ENCODE measurements at regions of chr10 and their contacts with region 1.

Region 1: DNA sequence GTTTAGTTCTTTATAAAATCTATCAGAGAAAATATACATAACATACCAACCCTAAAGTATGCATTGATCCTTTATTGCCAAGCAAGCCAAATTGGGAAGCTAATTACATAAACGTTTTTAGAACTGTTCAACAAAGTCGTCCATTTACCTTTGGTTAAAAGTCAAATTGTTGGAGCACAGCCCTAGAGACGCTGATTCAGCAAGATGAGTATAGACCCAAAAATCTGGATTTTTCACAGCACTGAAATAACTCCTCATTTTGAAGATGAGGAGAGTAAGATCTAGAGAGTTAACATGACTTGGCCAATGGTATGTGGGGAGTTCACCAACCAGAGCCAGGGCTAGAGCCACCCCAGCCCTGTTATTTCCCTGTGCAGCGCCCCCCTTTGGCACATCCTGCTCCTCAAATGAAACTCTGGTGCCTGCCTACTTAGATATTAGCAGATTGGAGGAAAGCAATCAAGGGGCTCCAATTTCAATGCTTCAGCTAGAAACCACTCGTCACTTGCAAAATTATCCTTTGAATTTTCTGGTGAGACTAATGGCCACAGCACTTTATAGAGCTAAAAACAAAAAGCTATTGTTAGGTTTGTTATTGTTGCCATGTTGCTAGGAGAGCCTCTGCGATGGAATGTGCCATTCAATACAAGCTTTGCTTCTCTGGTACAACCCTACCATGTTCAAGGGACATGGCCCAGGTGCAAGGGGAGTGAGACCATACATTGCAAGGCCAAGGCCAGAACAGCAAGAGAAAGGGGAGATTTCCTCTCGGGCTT is 132.6 kb upstream of the ZEB1 start:
- DNase-seq: no peak
- ATAC-seq: no peak
- H3K4me3 Mint-ChIP-seq: no peak overlapping the region
- H3K27ac Mint-ChIP-seq: no peak overlapping the region
- H3K4me1 Mint-ChIP-seq: no peaks in the 10 kb centered on the region
- H3K27me3 Mint-ChIP-seq: no peaks in the 10 kb centered on the region
- CTCF ChIP-seq: no peak

Region 2: GRCh38 chr10:31101123-31101522 is 85.3 kb before region 1 on chr10:
- CTCF ChIA-PET with region 1: no interaction called
- POLR2A ChIA-PET with region 1: no interaction called
- intact Hi-C with region 1: no loop called
- DNase-seq: no peak
- ATAC-seq: peak; percentile 91
- H3K4me3 Mint-ChIP-seq: no peak overlapping the region
- H3K27ac Mint-ChIP-seq: peak overlapping the region; percentile 59
- H3K4me1 Mint-ChIP-seq: peaks cover 21% of the 10 kb centered on the region
- H3K27me3 Mint-ChIP-seq: peaks cover 2% of the 10 kb centered on the region
- CTCF ChIP-seq: no peak

Region 3: GRCh38 chr10:31723106-31723750 is 536.8 kb after region 1 on chr10:
- CTCF ChIA-PET with region 1: no interaction called
- POLR2A ChIA-PET with region 1: no interaction called
- intact Hi-C with region 1: no loop called
- DNase-seq: no peak
- ATAC-seq: no peak
- H3K4me3 Mint-ChIP-seq: no peak overlapping the region
- H3K27ac Mint-ChIP-seq: no peak overlapping the region
- H3K4me1 Mint-ChIP-seq: no peaks in the 10 kb centered on the region
- H3K27me3 Mint-ChIP-seq: peaks cover 1% of the 10 kb centered on the region
- CTCF ChIP-seq: no peak

Region 4: GRCh38 chr10:32104622-32105509 is 918.5 kb after region 1 on chr10:
- CTCF ChIA-PET with region 1: no interaction called
- POLR2A ChIA-PET with region 1: no interaction called
- intact Hi-C with region 1: loop called (anchors 10 kb)
- DNase-seq: no peak
- ATAC-seq: no peak
- H3K4me3 Mint-ChIP-seq: no peak overlapping the region
- H3K27ac Mint-ChIP-seq: no peak overlapping the region
- H3K4me1 Mint-ChIP-seq: no peaks in the 10 kb centered on the region
- H3K27me3 Mint-ChIP-seq: peaks cover 7% of the 10 kb centered on the region
- CTCF ChIP-seq: no peak